B cell (primary cell): ENCODE measurements at regions of chr1 and their contacts with region 1.

Region 1: GRCh38 chr1:39408641-39409054 is 82.8 kb upstream of the BMP8A start:
- DNase-seq: peak; percentile 87
- ATAC-seq: peak; percentile 86
- H3K4me3 ChIP-seq: peak overlapping the region in 4 of 5 experiments; percentile 47 to 70 (median 64)
- H3K4me3 Mint-ChIP-seq: peak overlapping the region; percentile 90
- H3K27ac ChIP-seq: peak overlapping the region in 1 of 2 donors; percentile 54
- H3K27ac Mint-ChIP-seq: no peak overlapping the region
- H3K4me1 ChIP-seq: peaks cover 16 to 19% of the 10 kb centered on the region in 2 donors
- H3K4me1 Mint-ChIP-seq: peaks cover 30% of the 10 kb centered on the region
- H3K27me3 ChIP-seq: no peaks in the 10 kb centered on the region
- H3K27me3 Mint-ChIP-seq: no peaks in the 10 kb centered on the region
- CTCF ChIP-seq: no peak

Region 2: GRCh38 chr1:39268112-39268581 is 140.5 kb before region 1 on chr1:
- CTCF ChIA-PET with region 1: interaction called, 12 read pairs
- POLR2A ChIA-PET with region 1: no interaction called
- intact Hi-C with region 1: loop called (anchors 1 kb)
- DNase-seq: peak; percentile 49
- ATAC-seq: no peak
- H3K4me3 ChIP-seq: peak overlapping the region in 3 of 5 experiments; percentile 12 to 47 (median 15)
- H3K4me3 Mint-ChIP-seq: peak overlapping the region; percentile 85
- H3K27ac ChIP-seq: peak overlapping the region; percentile 73 to 74
- H3K27ac Mint-ChIP-seq: peak overlapping the region; percentile 89
- H3K4me1 ChIP-seq: peaks cover 66 to 67% of the 10 kb centered on the region in 2 donors
- H3K4me1 Mint-ChIP-seq: peaks cover 65% of the 10 kb centered on the region
- H3K27me3 ChIP-seq: no peaks in the 10 kb centered on the region
- H3K27me3 Mint-ChIP-seq: no peaks in the 10 kb centered on the region
- CTCF ChIP-seq: no peak

Region 3: GRCh38 chr1:39391691-39392679 is 16.7 kb before region 1 on chr1:
- CTCF ChIA-PET with region 1: interaction called, 30 read pairs
- POLR2A ChIA-PET with region 1: interaction called, 3 read pairs
- intact Hi-C with region 1: loop called (anchors 2 kb)
- DNase-seq: no peak
- ATAC-seq: no peak
- H3K4me3 ChIP-seq: no peak overlapping the region
- H3K4me3 Mint-ChIP-seq: no peak overlapping the region
- H3K27ac ChIP-seq: no peak overlapping the region
- H3K27ac Mint-ChIP-seq: peak overlapping the region; percentile 57
- H3K4me1 ChIP-seq: peaks cover 20 to 22% of the 10 kb centered on the region in 2 donors
- H3K4me1 Mint-ChIP-seq: peaks cover 43% of the 10 kb centered on the region
- H3K27me3 ChIP-seq: no peaks in the 10 kb centered on the region
- H3K27me3 Mint-ChIP-seq: no peaks in the 10 kb centered on the region
- CTCF ChIP-seq: no peak

Region 4: DNA sequence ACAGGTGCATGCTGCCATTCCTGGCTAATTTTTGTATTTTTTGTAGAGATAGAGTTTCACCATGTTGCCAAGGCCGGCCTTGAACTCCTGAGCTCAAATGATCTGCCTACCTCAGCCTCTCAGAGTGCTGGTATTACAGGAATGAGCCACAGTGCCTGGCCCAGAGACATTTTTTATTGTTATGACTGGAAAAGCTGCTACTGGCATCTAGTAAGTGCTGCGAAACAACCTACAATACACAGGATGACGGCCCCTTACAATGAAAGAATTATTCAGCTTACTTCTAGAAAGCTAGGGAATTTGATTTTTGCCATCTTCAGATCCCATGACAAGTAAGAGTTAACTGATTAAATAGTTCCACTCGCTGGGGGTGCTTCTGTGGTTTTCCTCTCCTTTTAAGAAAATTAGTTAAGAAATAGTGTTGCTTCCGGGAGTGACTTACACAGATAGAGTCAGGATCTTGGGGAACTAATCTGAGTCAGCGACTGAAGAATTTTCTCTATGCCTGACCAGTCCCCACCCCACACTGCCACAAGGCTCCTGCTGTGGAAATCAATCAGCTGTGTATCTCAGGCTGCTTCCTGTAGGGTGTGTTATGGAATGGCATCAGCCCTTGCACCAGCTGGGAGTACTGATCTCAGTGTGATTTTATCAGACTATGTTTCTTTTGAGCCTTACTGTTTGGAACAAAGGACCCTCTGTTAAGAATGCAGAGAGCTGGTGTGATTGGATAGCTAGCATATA is 10.2 kb before region 1 on chr1:
- CTCF ChIA-PET with region 1: interaction called, 30 read pairs
- POLR2A ChIA-PET with region 1: interaction called, 3 read pairs
- intact Hi-C with region 1: loop called (anchors 1 kb)
- DNase-seq: peak; percentile 24
- ATAC-seq: peak; percentile 56
- H3K4me3 ChIP-seq: no peak overlapping the region
- H3K4me3 Mint-ChIP-seq: no peak overlapping the region
- H3K27ac ChIP-seq: peak overlapping the region in 1 of 2 donors; percentile 20
- H3K27ac Mint-ChIP-seq: peak overlapping the region; percentile 15
- H3K4me1 ChIP-seq: peaks cover 34 to 35% of the 10 kb centered on the region in 2 donors
- H3K4me1 Mint-ChIP-seq: peaks cover 51% of the 10 kb centered on the region
- H3K27me3 ChIP-seq: no peaks in the 10 kb centered on the region
- H3K27me3 Mint-ChIP-seq: no peaks in the 10 kb centered on the region
- CTCF ChIP-seq: no peak

Region 5: DNA sequence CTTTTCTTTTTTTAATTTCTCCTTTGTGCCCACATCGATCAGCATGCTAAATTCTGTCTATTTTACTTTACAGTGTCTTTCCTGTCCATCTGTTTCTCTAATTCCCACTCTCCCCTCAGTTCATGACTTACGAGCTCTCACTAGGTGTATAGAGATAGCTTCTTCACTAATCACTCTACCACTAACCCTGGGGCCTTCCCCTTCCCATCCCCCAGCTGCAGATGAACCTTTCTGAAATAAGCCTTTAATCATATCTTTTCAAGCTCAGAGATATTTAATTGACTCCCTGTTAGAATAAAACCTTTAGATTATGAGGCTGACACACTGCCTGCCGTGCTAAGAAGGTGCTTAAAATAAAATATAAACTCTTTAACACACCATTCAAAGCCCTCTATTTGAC is 16.5 kb after region 1 on chr1:
- CTCF ChIA-PET with region 1: interaction called, 16 read pairs
- POLR2A ChIA-PET with region 1: interaction called, 3 read pairs
- intact Hi-C with region 1: no loop called
- DNase-seq: no peak
- ATAC-seq: no peak
- H3K4me3 ChIP-seq: no peak overlapping the region
- H3K4me3 Mint-ChIP-seq: no peak overlapping the region
- H3K27ac ChIP-seq: no peak overlapping the region
- H3K27ac Mint-ChIP-seq: no peak overlapping the region
- H3K4me1 ChIP-seq: no peaks in the 10 kb centered on the region
- H3K4me1 Mint-ChIP-seq: no peaks in the 10 kb centered on the region
- H3K27me3 ChIP-seq: no peaks in the 10 kb centered on the region
- H3K27me3 Mint-ChIP-seq: no peaks in the 10 kb centered on the region
- CTCF ChIP-seq: no peak

Region 6: GRCh38 chr1:39525366-39526165 is 116.9 kb after region 1 on chr1:
- CTCF ChIA-PET with region 1: interaction called, 3 read pairs
- POLR2A ChIA-PET with region 1: no interaction called
- intact Hi-C with region 1: loop called (anchors 5 kb)
- DNase-seq: peak; percentile 79
- ATAC-seq: peak; percentile 99
- H3K4me3 ChIP-seq: no peak overlapping the region
- H3K4me3 Mint-ChIP-seq: peak overlapping the region; percentile 70
- H3K27ac ChIP-seq: peak overlapping the region; percentile 50 to 55
- H3K27ac Mint-ChIP-seq: peak overlapping the region; percentile 84
- H3K4me1 ChIP-seq: peaks cover 30 to 43% of the 10 kb centered on the region in 2 donors
- H3K4me1 Mint-ChIP-seq: peaks cover 23% of the 10 kb centered on the region
- H3K27me3 ChIP-seq: no peaks in the 10 kb centered on the region
- H3K27me3 Mint-ChIP-seq: no peaks in the 10 kb centered on the region
- CTCF ChIP-seq: no peak

Region 7: GRCh38 chr1:39538588-39539465 is 130.2 kb after region 1 on chr1:
- CTCF ChIA-PET with region 1: interaction called, 12 read pairs
- POLR2A ChIA-PET with region 1: no interaction called
- intact Hi-C with region 1: no loop called
- DNase-seq: peak; percentile 72
- ATAC-seq: peak; percentile 78
- H3K4me3 ChIP-seq: no peak overlapping the region
- H3K4me3 Mint-ChIP-seq: no peak overlapping the region
- H3K27ac ChIP-seq: no peak overlapping the region
- H3K27ac Mint-ChIP-seq: no peak overlapping the region
- H3K4me1 ChIP-seq: peaks cover 20 to 27% of the 10 kb centered on the region in 2 donors
- H3K4me1 Mint-ChIP-seq: peaks cover 20% of the 10 kb centered on the region
- H3K27me3 ChIP-seq: no peaks in the 10 kb centered on the region
- H3K27me3 Mint-ChIP-seq: no peaks in the 10 kb centered on the region
- CTCF ChIP-seq: peak; percentile 91